ENCODE measurements at regions of chr5 and their contacts with region 1.

Region 1: DNA sequence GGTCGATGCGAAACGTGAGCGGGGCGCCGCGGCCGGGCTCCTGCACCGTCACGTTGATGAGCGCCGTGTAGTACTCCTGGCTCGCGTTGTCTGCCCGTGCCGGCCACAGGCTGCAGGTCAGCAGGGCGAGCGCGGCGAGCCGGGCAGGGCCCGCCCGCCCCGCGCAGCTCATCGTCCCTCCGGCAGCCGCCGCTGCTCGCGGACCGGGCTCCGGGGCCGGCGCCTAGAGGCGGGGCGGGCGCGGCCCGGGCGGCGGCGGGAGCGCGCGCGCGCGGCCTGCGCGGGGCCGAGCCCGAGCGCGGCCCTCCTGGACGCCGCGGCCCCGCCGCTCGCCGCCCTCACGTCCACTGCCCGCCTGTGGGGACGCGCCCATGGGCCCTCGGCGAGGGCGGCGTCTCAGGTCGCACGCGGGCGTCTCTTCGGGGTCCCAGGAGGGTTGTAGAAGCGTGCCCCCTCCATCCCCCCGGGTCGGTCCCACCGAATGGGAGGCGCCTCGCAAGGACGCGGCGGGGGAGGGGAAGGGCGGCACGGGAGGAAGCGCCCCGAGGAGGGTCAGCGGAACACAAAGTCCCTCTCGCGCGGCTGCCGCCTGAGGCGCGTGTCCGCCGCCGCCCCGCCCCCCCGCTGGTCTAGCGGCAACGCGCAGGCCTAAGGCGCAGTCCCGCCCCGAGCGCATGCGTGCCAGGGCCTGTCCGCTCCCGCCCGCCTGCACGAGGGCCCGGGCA is at the start of gene RNF130:
- DNase-seq: peak; percentile 58 to 92 (median 83)
- ATAC-seq: peak; percentile 73
- H3K4me3 ChIP-seq: peak within 1 kb of the TSS; percentile 63 to 73
- H3K4me3 Mint-ChIP-seq: peak within 1 kb of the TSS; percentile 86
- H3K27ac ChIP-seq: peak within 1 kb of the TSS; percentile 54 to 71
- H3K27ac Mint-ChIP-seq: peak within 1 kb of the TSS; percentile 80
- H3K4me1 ChIP-seq: peaks cover 26% of the 10 kb centered on the region
- H3K4me1 Mint-ChIP-seq: peaks cover 32% of the 10 kb centered on the region
- H3K27me3 ChIP-seq: no peaks in the 10 kb centered on the region
- H3K27me3 Mint-ChIP-seq: no peaks in the 10 kb centered on the region
- CTCF ChIP-seq: no peak
- total RNA-seq, gene RNF130: 13.9 to 15.8 TPM

Region 2: DNA sequence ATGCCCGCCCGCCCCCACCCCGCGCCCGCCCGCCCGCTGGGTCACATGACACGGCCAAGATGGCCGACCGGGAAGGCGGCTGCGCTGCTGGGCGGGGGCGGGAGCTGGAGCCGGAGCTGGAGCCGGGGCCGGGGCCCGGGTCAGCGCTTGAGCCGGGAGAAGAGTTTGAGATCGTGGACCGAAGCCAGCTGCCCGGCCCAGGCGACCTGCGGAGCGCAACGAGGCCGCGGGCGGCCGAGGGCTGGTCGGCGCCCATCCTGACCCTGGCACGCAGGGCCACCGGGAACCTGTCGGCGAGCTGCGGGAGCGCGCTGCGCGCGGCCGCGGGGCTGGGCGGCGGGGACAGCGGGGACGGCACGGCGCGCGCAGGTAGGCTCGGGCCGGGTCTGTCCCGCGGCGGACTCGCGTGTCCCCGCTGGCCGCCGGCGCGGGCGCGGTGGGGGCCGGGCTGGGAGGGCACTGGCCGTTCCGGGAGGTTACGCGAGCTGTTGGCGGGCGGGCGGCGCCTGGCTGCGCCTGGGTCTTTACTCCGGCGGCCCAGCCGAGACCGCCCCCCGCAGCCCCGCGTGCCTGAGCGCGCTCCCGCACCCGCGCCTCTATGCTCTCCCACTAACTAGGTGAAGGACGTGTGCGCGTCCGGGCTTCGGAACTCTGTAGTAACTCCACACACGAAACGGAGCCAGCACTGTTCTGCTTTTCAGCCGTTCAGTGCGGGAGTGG is 521.0 kb before region 1 on chr5 and contains the start of gene RUFY1:
- CTCF ChIA-PET with region 1: no interaction called
- POLR2A ChIA-PET with region 1: no interaction called
- intact Hi-C with region 1: loop called (anchors 2 to 5 kb)
- DNase-seq: peak; percentile 69 to 91 (median 82)
- ATAC-seq: peak; percentile 71
- H3K4me3 ChIP-seq: peak within 1 kb of the TSS; percentile 89 to 98
- H3K4me3 Mint-ChIP-seq: peak within 1 kb of the TSS; percentile 97
- H3K27ac ChIP-seq: peak within 1 kb of the TSS; percentile 76 to 80
- H3K27ac Mint-ChIP-seq: peak within 1 kb of the TSS; percentile 97
- H3K4me1 ChIP-seq: peaks cover 26% of the 10 kb centered on the region
- H3K4me1 Mint-ChIP-seq: peaks cover 42% of the 10 kb centered on the region
- H3K27me3 ChIP-seq: no peaks in the 10 kb centered on the region
- H3K27me3 Mint-ChIP-seq: no peaks in the 10 kb centered on the region
- CTCF ChIP-seq: no peak
- total RNA-seq, gene RUFY1: 19.6 to 19.8 TPM

Region 3: DNA sequence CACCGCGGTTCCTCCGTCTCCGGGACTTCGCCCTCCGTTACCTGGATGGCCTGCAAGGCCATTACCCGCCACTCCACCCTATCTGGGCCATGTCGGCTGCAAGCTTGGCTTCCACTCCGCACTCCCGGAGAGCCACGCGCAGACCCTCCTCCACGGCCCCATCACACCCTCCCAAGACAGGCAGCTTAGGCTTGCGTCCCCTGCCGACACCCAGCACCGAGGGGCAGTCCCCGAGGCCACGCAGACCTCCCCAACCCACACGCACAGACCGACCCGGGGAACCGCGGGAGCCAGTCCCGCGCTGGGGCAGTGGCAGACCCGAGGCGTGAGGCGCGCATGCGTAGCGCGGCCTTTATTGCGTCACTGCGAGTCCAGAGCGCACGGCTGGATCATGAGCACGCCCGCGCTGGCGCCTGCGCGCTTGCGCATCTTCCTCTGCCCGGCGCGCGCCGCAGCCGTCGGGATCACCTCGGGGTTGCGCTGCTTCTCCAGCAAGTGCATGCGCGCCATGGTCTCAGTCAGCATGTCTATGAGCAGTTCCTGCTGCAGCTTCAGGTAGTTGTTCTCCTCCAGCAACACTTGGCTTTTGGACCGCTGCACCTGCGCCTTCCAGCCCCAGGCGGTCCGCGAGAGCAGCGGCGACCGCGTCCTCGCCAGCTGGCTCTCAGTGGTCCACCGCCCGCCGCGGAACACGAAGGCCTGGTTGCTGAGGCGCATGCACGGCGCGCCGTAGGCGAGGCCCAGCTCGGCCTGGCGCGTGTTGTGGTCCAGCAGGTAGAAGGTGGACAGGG is 393.3 kb before region 1 on chr5:
- CTCF ChIA-PET with region 1: no interaction called
- POLR2A ChIA-PET with region 1: no interaction called
- intact Hi-C with region 1: loop called in 1 of 2 experiments (anchors 5 kb)
- DNase-seq: peak; percentile 85 to 98 (median 92)
- ATAC-seq: peak; percentile 85
- H3K4me3 ChIP-seq: peak overlapping the region; percentile 66 to 98
- H3K4me3 Mint-ChIP-seq: peak overlapping the region; percentile 98
- H3K27ac ChIP-seq: peak overlapping the region; percentile 83 to 91
- H3K27ac Mint-ChIP-seq: peak overlapping the region; percentile 99
- H3K4me1 ChIP-seq: peaks cover 22% of the 10 kb centered on the region
- H3K4me1 Mint-ChIP-seq: peaks cover 37% of the 10 kb centered on the region
- H3K27me3 ChIP-seq: no peaks in the 10 kb centered on the region
- H3K27me3 Mint-ChIP-seq: no peaks in the 10 kb centered on the region
- CTCF ChIP-seq: no peak

Region 4: GRCh38 chr5:179697993-179698934 is 373.4 kb before region 1 on chr5:
- CTCF ChIA-PET with region 1: no interaction called
- POLR2A ChIA-PET with region 1: no interaction called
- intact Hi-C with region 1: loop called in 1 of 2 experiments (anchors 1 kb)
- DNase-seq: peak; percentile 97 to 100 (median 98)
- ATAC-seq: peak; percentile 87
- H3K4me3 ChIP-seq: peak overlapping the region; percentile 84 to 89
- H3K4me3 Mint-ChIP-seq: peak overlapping the region; percentile 99
- H3K27ac ChIP-seq: peak overlapping the region; percentile 92 to 94
- H3K27ac Mint-ChIP-seq: peak overlapping the region; percentile 100
- H3K4me1 ChIP-seq: peaks cover 32% of the 10 kb centered on the region
- H3K4me1 Mint-ChIP-seq: peaks cover 40% of the 10 kb centered on the region
- H3K27me3 ChIP-seq: no peaks in the 10 kb centered on the region
- H3K27me3 Mint-ChIP-seq: no peaks in the 10 kb centered on the region
- CTCF ChIP-seq: no peak

Region 5: GRCh38 chr5:179821581-179822432 is 249.9 kb before region 1 on chr5:
- CTCF ChIA-PET with region 1: no interaction called
- POLR2A ChIA-PET with region 1: no interaction called
- intact Hi-C with region 1: loop called in 1 of 2 experiments (anchors 5 kb)
- DNase-seq: peak; percentile 79 to 94 (median 88)
- ATAC-seq: peak; percentile 63
- H3K4me3 ChIP-seq: peak overlapping the region; percentile 81 to 94
- H3K4me3 Mint-ChIP-seq: peak overlapping the region; percentile 95
- H3K27ac ChIP-seq: peak overlapping the region; percentile 92 to 99
- H3K27ac Mint-ChIP-seq: peak overlapping the region; percentile 96
- H3K4me1 ChIP-seq: peaks cover 47% of the 10 kb centered on the region
- H3K4me1 Mint-ChIP-seq: peaks cover 59% of the 10 kb centered on the region
- H3K27me3 ChIP-seq: peaks cover 0 to 2% of the 10 kb centered on the region in 2 experiments
- H3K27me3 Mint-ChIP-seq: no peaks in the 10 kb centered on the region
- CTCF ChIP-seq: no peak

Region 6: GRCh38 chr5:179907570-179908324 is 163.9 kb before region 1 on chr5 and contains the start of gene TBC1D9B:
- CTCF ChIA-PET with region 1: no interaction called
- POLR2A ChIA-PET with region 1: no interaction called
- intact Hi-C with region 1: loop called in 1 of 2 experiments (anchors 5 kb)
- DNase-seq: peak; percentile 37 to 90 (median 67)
- ATAC-seq: peak; percentile 90
- H3K4me3 ChIP-seq: peak within 1 kb of the TSS; percentile 52 to 57
- H3K4me3 Mint-ChIP-seq: peak within 1 kb of the TSS; percentile 86
- H3K27ac ChIP-seq: peak within 1 kb of the TSS in 1 of 2 experiments; percentile 54
- H3K27ac Mint-ChIP-seq: peak within 1 kb of the TSS; percentile 79
- H3K4me1 ChIP-seq: peaks cover 17% of the 10 kb centered on the region
- H3K4me1 Mint-ChIP-seq: peaks cover 15% of the 10 kb centered on the region
- H3K27me3 ChIP-seq: no peaks in the 10 kb centered on the region
- H3K27me3 Mint-ChIP-seq: no peaks in the 10 kb centered on the region
- CTCF ChIP-seq: peak; percentile 14
- total RNA-seq, gene TBC1D9B: 39.7 to 48.1 TPM

Region 7: GRCh38 chr5:180090098-180090768 is 18.5 kb after region 1 on chr5:
- CTCF ChIA-PET with region 1: interaction called, 6 read pairs
- POLR2A ChIA-PET with region 1: no interaction called
- intact Hi-C with region 1: loop called (anchors 1 kb)
- DNase-seq: peak; percentile 62 to 90 (median 81)
- ATAC-seq: peak; percentile 71
- H3K4me3 ChIP-seq: peak overlapping the region; percentile 57
- H3K4me3 Mint-ChIP-seq: peak overlapping the region; percentile 86
- H3K27ac ChIP-seq: peak overlapping the region in 1 of 2 experiments; percentile 42
- H3K27ac Mint-ChIP-seq: peak overlapping the region; percentile 88
- H3K4me1 ChIP-seq: peaks cover 16% of the 10 kb centered on the region
- H3K4me1 Mint-ChIP-seq: peaks cover 27% of the 10 kb centered on the region
- H3K27me3 ChIP-seq: no peaks in the 10 kb centered on the region
- H3K27me3 Mint-ChIP-seq: peaks cover 4% of the 10 kb centered on the region
- CTCF ChIP-seq: peak; percentile 68

Region 8: DNA sequence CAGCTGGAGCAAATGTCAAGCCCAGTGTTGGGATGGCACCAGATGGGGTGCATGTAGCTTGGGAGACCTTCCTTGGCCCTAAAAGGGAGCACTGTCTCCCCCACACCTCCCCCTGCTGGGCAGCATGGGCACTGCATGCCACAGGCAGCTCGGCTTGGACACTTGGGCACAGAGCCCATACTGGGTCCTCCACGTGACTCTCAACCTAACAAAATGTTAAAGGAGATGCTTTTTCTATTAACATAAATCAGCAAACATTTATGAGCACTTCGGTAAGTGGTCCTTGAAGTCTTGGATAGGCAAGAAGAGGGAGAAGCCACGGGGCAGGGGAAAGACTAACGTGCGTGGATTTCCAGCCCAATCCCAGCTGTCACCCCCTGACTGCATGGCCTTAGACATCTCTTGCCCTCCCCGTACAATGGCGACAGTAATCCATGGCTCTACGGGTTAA is 244.1 kb after region 1 on chr5:
- CTCF ChIA-PET with region 1: no interaction called
- POLR2A ChIA-PET with region 1: no interaction called
- intact Hi-C with region 1: no loop called
- DNase-seq: peak; percentile 51 to 85 (median 76)
- ATAC-seq: peak; percentile 97
- H3K4me3 ChIP-seq: no peak overlapping the region
- H3K4me3 Mint-ChIP-seq: no peak overlapping the region
- H3K27ac ChIP-seq: no peak overlapping the region
- H3K27ac Mint-ChIP-seq: no peak overlapping the region
- H3K4me1 ChIP-seq: no peaks in the 10 kb centered on the region
- H3K4me1 Mint-ChIP-seq: no peaks in the 10 kb centered on the region
- H3K27me3 ChIP-seq: no peaks in the 10 kb centered on the region
- H3K27me3 Mint-ChIP-seq: peaks cover 4% of the 10 kb centered on the region
- CTCF ChIP-seq: peak; percentile 98

Measured in CD8-positive, alpha-beta T cell (primary cell).